CD4-positive, alpha-beta T cell (primary cell): ENCODE measurements at regions of chr5 and their contacts with region 1.

Region 1: DNA sequence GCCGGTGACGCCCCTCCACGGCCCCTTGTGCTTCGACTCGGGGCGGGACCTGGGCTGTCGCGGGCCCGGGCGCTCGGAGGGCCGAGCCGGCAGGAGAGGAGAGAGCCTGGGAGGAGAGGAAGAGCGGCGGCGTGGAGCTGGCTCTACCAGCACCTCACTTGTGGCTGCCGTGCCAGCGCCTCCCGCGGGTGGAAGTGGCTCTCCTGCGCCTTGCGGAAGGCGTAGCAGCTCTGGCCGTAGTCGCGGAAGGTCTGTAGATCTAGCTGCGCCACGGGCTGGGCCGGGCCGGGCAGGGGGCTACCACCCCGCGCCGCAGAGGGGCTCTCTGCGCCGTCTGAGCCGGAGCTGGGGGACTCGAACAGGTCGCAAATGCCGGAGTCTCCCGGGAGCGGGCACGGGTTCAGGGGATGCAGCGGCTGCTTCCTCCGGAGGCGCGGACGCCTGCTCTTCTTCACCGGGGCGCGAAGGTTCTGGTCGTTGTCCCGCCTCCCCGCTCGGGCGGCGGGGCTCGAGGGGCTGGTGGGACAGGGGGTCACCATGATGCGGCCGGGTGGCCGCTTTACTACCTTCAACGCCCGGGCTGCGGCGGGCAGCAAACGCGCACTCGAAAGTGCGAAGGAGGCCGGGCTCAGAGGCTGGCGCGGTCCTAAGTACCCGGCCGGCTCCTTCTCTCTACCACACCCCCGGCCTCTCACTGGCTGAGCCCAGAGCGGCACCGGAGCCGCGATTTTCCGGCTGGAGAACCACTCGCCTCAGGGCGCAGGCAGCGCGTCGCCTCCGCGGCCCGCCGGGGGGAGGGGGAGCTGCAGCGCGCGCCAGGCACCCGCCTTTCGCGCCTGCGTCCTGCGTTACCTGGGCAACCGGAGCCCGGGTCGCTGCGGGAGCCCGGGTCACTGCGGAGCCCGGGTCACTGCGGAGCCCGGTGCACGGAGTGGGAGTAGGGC is at the start of gene CCNO:
- DNase-seq: peak in 12 of 14 experiments; percentile 16 to 76 (median 49)
- ATAC-seq: peak; percentile 73
- H3K4me3 ChIP-seq: peak within 1 kb of the TSS; percentile 60
- H3K4me3 Mint-ChIP-seq: peak within 1 kb of the TSS; percentile 86
- H3K27ac ChIP-seq: no peak within 1 kb of the TSS
- H3K27ac Mint-ChIP-seq: no peak within 1 kb of the TSS
- H3K4me1 ChIP-seq: peaks cover 37% of the 10 kb centered on the region
- H3K4me1 Mint-ChIP-seq: peaks cover 33% of the 10 kb centered on the region
- H3K27me3 ChIP-seq: peaks cover 67 to 72% of the 10 kb centered on the region in 2 experiments
- H3K27me3 Mint-ChIP-seq: peaks cover 86% of the 10 kb centered on the region
- CTCF ChIP-seq: no peak
- total RNA-seq, gene CCNO: not detected

Region 2: DNA sequence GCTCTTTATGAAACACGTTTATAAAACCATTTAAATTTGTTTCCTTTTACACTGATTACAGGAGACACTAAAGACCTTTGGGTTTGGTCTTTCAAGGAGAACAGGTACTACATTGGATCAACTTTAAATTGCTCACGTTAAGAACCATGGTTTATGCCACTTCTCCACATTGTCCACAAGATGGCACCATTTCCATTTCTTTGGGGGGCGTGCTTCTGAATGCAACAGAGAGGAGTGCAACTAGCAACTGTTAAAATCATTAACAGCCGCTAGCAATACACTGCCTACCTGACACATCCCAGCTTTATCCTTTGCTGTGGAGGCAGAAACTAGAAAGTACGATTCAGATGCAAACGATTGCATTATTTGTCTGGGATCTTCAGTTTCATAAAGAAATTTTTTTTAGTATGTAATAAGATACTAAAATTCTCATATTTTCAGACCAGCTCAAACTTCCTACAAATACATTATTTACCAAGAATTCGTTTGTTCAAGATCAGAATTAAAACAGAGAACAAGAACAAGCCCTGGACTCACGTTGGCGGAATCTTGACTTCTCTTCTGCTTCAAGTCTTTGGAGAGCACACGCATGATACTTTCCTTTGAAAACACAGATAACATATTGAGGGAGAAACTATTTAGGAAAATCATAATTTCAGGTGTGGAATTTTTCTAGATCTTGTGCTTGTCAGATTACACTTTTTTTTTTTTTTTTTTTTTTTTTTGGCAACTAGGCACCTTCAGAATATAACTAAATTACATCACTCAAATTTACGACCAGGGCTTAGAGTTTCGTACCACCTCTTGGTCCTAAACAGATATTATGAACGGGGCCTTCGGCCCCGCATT is 61.0 kb before region 1 on chr5:
- CTCF ChIA-PET with region 1: interaction called, 4 read pairs
- POLR2A ChIA-PET with region 1: interaction called, 3 read pairs
- intact Hi-C with region 1: loop called (anchors 5 kb)
- DNase-seq: peak; percentile 18 to 90 (median 47)
- ATAC-seq: peak; percentile 82
- H3K4me3 ChIP-seq: peak overlapping the region; percentile 63
- H3K4me3 Mint-ChIP-seq: peak overlapping the region; percentile 79
- H3K27ac ChIP-seq: no peak overlapping the region
- H3K27ac Mint-ChIP-seq: no peak overlapping the region
- H3K4me1 ChIP-seq: peaks cover 28% of the 10 kb centered on the region
- H3K4me1 Mint-ChIP-seq: peaks cover 43% of the 10 kb centered on the region
- H3K27me3 ChIP-seq: peaks cover 49 to 83% of the 10 kb centered on the region in 2 experiments
- H3K27me3 Mint-ChIP-seq: peaks cover 86% of the 10 kb centered on the region
- CTCF ChIP-seq: peak; percentile 90

Region 3: GRCh38 chr5:55222985-55223811 is 10.1 kb before region 1 on chr5:
- CTCF ChIA-PET with region 1: interaction called, 4 read pairs
- POLR2A ChIA-PET with region 1: interaction called, 19 read pairs
- intact Hi-C with region 1: no loop called
- DNase-seq: peak in 3 of 14 experiments; percentile 22 to 35 (median 32)
- ATAC-seq: peak; percentile 15
- H3K4me3 ChIP-seq: peak overlapping the region; percentile 10
- H3K4me3 Mint-ChIP-seq: peak overlapping the region; percentile 72
- H3K27ac ChIP-seq: no peak overlapping the region
- H3K27ac Mint-ChIP-seq: no peak overlapping the region
- H3K4me1 ChIP-seq: peaks cover 52% of the 10 kb centered on the region
- H3K4me1 Mint-ChIP-seq: peaks cover 53% of the 10 kb centered on the region
- H3K27me3 ChIP-seq: peaks cover 81 to 96% of the 10 kb centered on the region in 2 experiments
- H3K27me3 Mint-ChIP-seq: peaks cover 90% of the 10 kb centered on the region
- CTCF ChIP-seq: no peak